MCF 10A (cell line): ENCODE measurements at regions of chr9 and their contacts with region 1.

Region 1: DNA sequence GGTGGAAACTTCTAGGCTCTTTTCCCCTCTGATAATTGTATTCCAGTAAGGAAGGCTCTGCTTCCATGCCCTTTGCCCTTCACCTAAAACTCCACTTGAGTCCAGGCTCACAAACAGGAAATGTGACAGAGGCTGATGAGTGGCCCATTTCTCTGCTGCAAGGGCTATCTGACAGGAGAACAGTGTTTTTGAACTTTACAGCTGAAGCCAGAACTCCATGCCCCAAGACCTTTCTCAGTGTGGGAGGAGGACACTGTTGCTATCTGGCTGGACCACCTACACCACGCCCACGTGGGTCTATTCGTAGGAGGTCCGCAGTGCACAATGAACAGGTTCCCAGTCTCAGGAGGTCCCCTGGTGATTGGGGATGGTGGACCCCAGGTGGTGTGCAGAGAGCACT is 13.6 kb downstream of the GGTA1 start:
- DNase-seq: no peak
- H3K4me3 Mint-ChIP-seq: no peak overlapping the region
- H3K27ac Mint-ChIP-seq: no peak overlapping the region
- H3K4me1 Mint-ChIP-seq: no peaks in the 10 kb centered on the region
- H3K27me3 Mint-ChIP-seq: no peaks in the 10 kb centered on the region
- CTCF ChIP-seq: no peak

Region 2: GRCh38 chr9:121498150-121498486 is 12.1 kb after region 1 on chr9:
- CTCF ChIA-PET with region 1: interaction called, 13 read pairs
- POLR2A ChIA-PET with region 1: no interaction called
- intact Hi-C with region 1: no loop called
- DNase-seq: peak; percentile 87
- H3K4me3 Mint-ChIP-seq: peak overlapping the region; percentile 73
- H3K27ac Mint-ChIP-seq: peak overlapping the region; percentile 35
- H3K4me1 Mint-ChIP-seq: peaks cover 18% of the 10 kb centered on the region
- H3K27me3 Mint-ChIP-seq: peaks cover 13% of the 10 kb centered on the region
- CTCF ChIP-seq: peak; percentile 46